ENCODE measurements at regions of chr2 and their contacts with region 1.

Region 1: DNA sequence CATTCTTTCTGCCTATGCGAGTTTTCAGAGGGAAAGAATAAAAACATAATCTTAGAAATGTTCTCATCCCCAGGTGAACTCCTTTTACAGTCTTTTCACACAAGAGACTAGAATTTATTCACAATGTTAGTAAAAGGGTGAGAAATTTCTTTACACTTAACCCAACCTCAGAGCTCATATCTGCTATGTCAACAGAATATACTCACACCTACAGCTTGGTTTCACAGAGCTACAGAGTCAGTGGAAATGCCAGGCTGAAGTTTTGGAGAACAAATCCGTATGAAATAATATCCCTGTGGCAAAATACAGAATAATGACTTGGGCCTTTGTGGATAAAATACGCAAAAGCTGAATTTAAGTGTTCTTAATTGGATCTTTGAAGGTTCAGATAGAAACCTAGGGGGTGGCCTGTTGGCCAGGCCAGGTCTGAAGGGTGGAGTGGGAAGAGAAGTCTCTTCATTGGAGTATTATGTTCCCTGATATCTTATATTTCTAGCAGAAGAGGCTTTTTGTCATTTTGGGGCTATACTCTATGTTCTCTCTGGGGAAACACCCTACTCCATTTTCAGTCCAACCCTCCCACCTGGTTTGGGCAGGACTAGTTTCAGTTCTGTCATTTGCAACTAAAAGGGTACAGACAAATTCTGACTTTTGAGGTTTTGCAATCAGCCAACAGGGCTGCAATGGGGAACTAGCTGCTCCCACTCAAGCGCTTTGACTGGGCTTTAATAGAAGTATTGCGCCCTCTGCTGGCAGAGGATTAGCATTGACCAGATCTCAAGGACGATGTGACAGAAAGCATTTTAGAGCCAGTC is 25.7 kb downstream of the FBXO48 start:
- DNase-seq: peak; percentile 60 to 95 (median 85)
- ATAC-seq: peak; percentile 91
- H3K4me3 ChIP-seq: no peak overlapping the region
- H3K4me3 Mint-ChIP-seq: peak overlapping the region; percentile 49
- H3K27ac ChIP-seq: peak overlapping the region in 1 of 2 experiments; percentile 83
- H3K27ac Mint-ChIP-seq: peak overlapping the region; percentile 93
- H3K4me1 ChIP-seq: peaks cover 6% of the 10 kb centered on the region
- H3K4me1 Mint-ChIP-seq: peaks cover 16% of the 10 kb centered on the region
- H3K27me3 ChIP-seq: no peaks in the 10 kb centered on the region
- H3K27me3 Mint-ChIP-seq: no peaks in the 10 kb centered on the region
- CTCF ChIP-seq: peak; percentile 92

Region 2: DNA sequence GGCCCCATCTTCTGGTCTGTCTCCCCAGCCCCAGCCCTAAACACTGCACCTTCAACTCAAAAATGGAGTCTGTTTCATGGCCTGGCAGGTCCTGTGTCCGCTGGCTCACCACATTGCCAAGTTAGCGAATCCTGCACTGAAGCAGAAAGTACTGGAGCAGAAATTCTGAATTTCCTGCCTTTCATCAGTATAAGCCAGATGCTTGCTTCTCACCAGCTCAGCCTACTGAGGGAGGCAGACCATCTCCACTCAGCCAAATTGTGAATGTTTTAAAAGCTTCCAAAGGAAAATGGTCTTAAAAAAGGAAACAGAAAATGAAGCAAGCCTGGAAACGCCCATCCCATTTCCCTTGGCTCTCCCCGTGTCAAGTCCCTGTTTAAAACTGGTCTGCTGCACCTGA is 536.4 kb before region 1 on chr2:
- CTCF ChIA-PET with region 1: no interaction called
- POLR2A ChIA-PET with region 1: no interaction called
- intact Hi-C with region 1: no loop called
- DNase-seq: no peak
- ATAC-seq: no peak
- H3K4me3 ChIP-seq: no peak overlapping the region
- H3K4me3 Mint-ChIP-seq: no peak overlapping the region
- H3K27ac ChIP-seq: no peak overlapping the region
- H3K27ac Mint-ChIP-seq: no peak overlapping the region
- H3K4me1 ChIP-seq: no peaks in the 10 kb centered on the region
- H3K4me1 Mint-ChIP-seq: no peaks in the 10 kb centered on the region
- H3K27me3 ChIP-seq: no peaks in the 10 kb centered on the region
- H3K27me3 Mint-ChIP-seq: peaks cover 10% of the 10 kb centered on the region
- CTCF ChIP-seq: no peak

Region 3: GRCh38 chr2:68115965-68116364 is 325.4 kb before region 1 on chr2:
- CTCF ChIA-PET with region 1: interaction called, 31 read pairs
- POLR2A ChIA-PET with region 1: no interaction called
- intact Hi-C with region 1: no loop called
- DNase-seq: no peak
- ATAC-seq: no peak
- H3K4me3 ChIP-seq: no peak overlapping the region
- H3K4me3 Mint-ChIP-seq: no peak overlapping the region
- H3K27ac ChIP-seq: no peak overlapping the region
- H3K27ac Mint-ChIP-seq: no peak overlapping the region
- H3K4me1 ChIP-seq: no peaks in the 10 kb centered on the region
- H3K4me1 Mint-ChIP-seq: no peaks in the 10 kb centered on the region
- H3K27me3 ChIP-seq: no peaks in the 10 kb centered on the region
- H3K27me3 Mint-ChIP-seq: no peaks in the 10 kb centered on the region
- CTCF ChIP-seq: no peak

Region 4: GRCh38 chr2:68196120-68196716 is 245.2 kb before region 1 on chr2:
- CTCF ChIA-PET with region 1: interaction called, 5 read pairs
- POLR2A ChIA-PET with region 1: no interaction called
- intact Hi-C with region 1: loop called in 1 of 2 experiments (anchors 5 kb)
- DNase-seq: peak in 6 of 9 experiments; percentile 14 to 76 (median 38)
- ATAC-seq: peak; percentile 20
- H3K4me3 ChIP-seq: no peak overlapping the region
- H3K4me3 Mint-ChIP-seq: no peak overlapping the region
- H3K27ac ChIP-seq: no peak overlapping the region
- H3K27ac Mint-ChIP-seq: peak overlapping the region; percentile 62
- H3K4me1 ChIP-seq: peaks cover 8% of the 10 kb centered on the region
- H3K4me1 Mint-ChIP-seq: peaks cover 61% of the 10 kb centered on the region
- H3K27me3 ChIP-seq: no peaks in the 10 kb centered on the region
- H3K27me3 Mint-ChIP-seq: no peaks in the 10 kb centered on the region
- CTCF ChIP-seq: peak; percentile 54

Region 5: DNA sequence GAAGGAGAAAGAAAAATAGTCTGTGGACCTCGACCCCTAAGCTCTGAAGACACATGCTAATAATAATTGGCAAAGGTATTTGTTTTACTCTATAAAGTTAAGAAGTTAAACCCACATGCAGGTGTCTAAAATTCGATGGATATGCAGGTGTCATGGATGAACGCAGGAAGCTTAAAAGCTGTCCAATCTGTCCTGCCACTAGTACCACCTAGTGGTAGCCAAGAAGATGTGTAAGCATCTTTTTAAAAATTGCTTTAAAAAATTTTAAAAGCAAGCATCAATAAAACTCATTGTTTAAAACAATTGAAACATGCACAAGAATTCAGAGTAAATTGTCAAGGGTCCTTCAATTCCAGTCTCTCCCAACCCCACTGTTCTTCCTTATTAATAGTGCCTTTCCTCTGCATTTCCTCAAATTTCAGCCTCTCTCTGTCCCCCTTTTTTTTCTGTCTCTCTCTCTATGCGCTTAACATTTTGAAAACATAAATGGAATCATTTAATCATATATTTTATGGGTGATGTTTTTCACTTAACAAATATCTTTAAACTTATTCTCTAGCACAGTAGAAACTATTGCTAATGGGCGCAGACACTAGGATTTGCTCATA is 158.5 kb before region 1 on chr2:
- CTCF ChIA-PET with region 1: interaction called, 15 read pairs
- POLR2A ChIA-PET with region 1: no interaction called
- intact Hi-C with region 1: loop called (anchors 1 to 10 kb)
- DNase-seq: peak in 4 of 9 experiments; percentile 9 to 70 (median 40)
- ATAC-seq: peak; percentile 71
- H3K4me3 ChIP-seq: no peak overlapping the region
- H3K4me3 Mint-ChIP-seq: no peak overlapping the region
- H3K27ac ChIP-seq: no peak overlapping the region
- H3K27ac Mint-ChIP-seq: no peak overlapping the region
- H3K4me1 ChIP-seq: no peaks in the 10 kb centered on the region
- H3K4me1 Mint-ChIP-seq: no peaks in the 10 kb centered on the region
- H3K27me3 ChIP-seq: peaks cover 0 to 5% of the 10 kb centered on the region in 2 experiments
- H3K27me3 Mint-ChIP-seq: peaks cover 11% of the 10 kb centered on the region
- CTCF ChIP-seq: peak; percentile 80

Region 6: DNA sequence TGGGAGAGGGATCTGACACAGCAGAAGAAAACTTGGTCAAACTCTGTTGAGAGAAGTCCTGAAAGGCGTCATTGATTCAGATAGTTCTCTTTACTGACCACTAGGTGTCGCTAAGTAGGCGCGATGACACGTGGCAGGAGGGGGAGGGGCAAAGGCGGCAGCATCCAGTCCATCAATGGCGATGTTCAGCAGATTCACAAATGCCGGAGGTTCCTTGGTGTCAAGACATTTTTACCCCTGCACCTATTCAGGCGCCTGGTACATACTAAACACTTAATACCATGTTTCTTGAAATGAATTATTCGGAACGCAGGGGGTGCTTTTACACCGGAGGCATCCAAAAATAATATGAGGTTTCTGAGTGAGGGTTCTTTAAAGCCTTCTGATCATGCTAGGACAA is 79.3 kb before region 1 on chr2:
- CTCF ChIA-PET with region 1: interaction called, 23 read pairs
- POLR2A ChIA-PET with region 1: interaction called, 9 read pairs
- intact Hi-C with region 1: loop called (anchors 1 kb)
- DNase-seq: peak; percentile 67 to 92 (median 80)
- ATAC-seq: peak; percentile 90
- H3K4me3 ChIP-seq: peak overlapping the region; percentile 16 to 32
- H3K4me3 Mint-ChIP-seq: peak overlapping the region; percentile 69
- H3K27ac ChIP-seq: peak overlapping the region in 1 of 2 experiments; percentile 72
- H3K27ac Mint-ChIP-seq: peak overlapping the region; percentile 33
- H3K4me1 ChIP-seq: peaks cover 9% of the 10 kb centered on the region
- H3K4me1 Mint-ChIP-seq: peaks cover 25% of the 10 kb centered on the region
- H3K27me3 ChIP-seq: no peaks in the 10 kb centered on the region
- H3K27me3 Mint-ChIP-seq: no peaks in the 10 kb centered on the region
- CTCF ChIP-seq: peak; percentile 73

Region 7: GRCh38 chr2:68426848-68427579 is 14.4 kb before region 1 on chr2:
- CTCF ChIA-PET with region 1: interaction called, 56 read pairs
- POLR2A ChIA-PET with region 1: interaction called, 3 read pairs
- intact Hi-C with region 1: no loop called
- DNase-seq: peak in 2 of 9 experiments; percentile 69 to 79
- ATAC-seq: peak; percentile 73
- H3K4me3 ChIP-seq: no peak overlapping the region
- H3K4me3 Mint-ChIP-seq: no peak overlapping the region
- H3K27ac ChIP-seq: peak overlapping the region; percentile 21 to 80
- H3K27ac Mint-ChIP-seq: peak overlapping the region; percentile 46
- H3K4me1 ChIP-seq: peaks cover 29% of the 10 kb centered on the region
- H3K4me1 Mint-ChIP-seq: peaks cover 21% of the 10 kb centered on the region
- H3K27me3 ChIP-seq: no peaks in the 10 kb centered on the region
- H3K27me3 Mint-ChIP-seq: no peaks in the 10 kb centered on the region
- CTCF ChIP-seq: no peak

Region 8: DNA sequence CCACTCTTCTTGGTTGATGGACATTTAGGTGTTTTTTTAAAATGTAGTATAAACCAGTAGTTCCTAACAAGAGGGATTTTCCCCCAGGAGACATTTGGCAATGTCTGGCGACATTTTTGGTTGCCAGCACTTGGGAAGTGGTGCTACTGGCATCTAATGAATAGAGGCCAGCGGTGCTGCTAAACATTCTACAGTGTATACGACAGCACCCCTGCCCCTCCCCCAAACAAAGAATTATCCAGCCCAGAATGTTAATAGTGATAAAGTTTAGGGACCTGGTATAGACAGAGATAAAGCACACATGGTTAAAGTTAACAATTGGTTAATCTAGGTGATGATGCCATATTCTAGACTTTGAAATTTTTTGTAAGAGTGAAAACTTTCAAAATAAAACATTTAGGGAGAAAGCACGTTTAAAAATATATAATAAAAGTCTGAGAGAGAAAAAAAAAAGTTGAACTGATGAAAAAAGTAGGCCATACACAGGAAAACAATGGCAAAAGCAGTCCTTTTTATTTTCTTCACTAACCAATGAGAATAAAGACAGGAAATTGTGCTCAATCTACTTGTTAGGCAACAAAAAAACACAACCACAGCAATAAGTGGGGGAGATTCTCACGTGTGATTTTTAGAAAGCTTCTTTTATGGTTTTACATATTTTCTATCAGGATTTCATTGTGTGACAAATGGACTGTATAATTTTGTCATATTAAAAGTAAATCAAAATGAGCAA is 10.9 kb after region 1 on chr2:
- CTCF ChIA-PET with region 1: interaction called, 10 read pairs
- POLR2A ChIA-PET with region 1: no interaction called
- intact Hi-C with region 1: no loop called
- DNase-seq: peak in 2 of 9 experiments; percentile 44 to 68
- ATAC-seq: peak; percentile 52
- H3K4me3 ChIP-seq: no peak overlapping the region
- H3K4me3 Mint-ChIP-seq: no peak overlapping the region
- H3K27ac ChIP-seq: no peak overlapping the region
- H3K27ac Mint-ChIP-seq: no peak overlapping the region
- H3K4me1 ChIP-seq: peaks cover 19% of the 10 kb centered on the region
- H3K4me1 Mint-ChIP-seq: peaks cover 18% of the 10 kb centered on the region
- H3K27me3 ChIP-seq: no peaks in the 10 kb centered on the region
- H3K27me3 Mint-ChIP-seq: no peaks in the 10 kb centered on the region
- CTCF ChIP-seq: no peak

Measured in CD8-positive, alpha-beta T cell (primary cell).